Heart left ventricle (tissue), 16 donors: ENCODE measurements at regions of chrX and their contacts with region 1.

Region 1: GRCh38 chrX:48574270-48575266 is at the start of gene RBM3:
- DNase-seq: peak; percentile 93 to 95 (median 95)
- ATAC-seq: peak; percentile 96 to 98 (median 98)
- H3K4me3 ChIP-seq: peak within 1 kb of the TSS; percentile 25 to 96 (median 80)
- H3K27ac ChIP-seq: peak within 1 kb of the TSS; percentile 95 to 100 (median 98)
- H3K4me1 ChIP-seq: peaks cover 0 to 17% (median 12%) of the 10 kb centered on the region in 12 donors
- H3K27me3 ChIP-seq: no peaks in the 10 kb centered on the region
- CTCF ChIP-seq: peak in 11 of 12 donors; percentile 24 to 62 (median 41)
- POLR2A ChIP-seq: peak; percentile 25 to 64
- total RNA-seq, gene RBM3: 34.5 to 172 (median 111) TPM

Region 2: DNA sequence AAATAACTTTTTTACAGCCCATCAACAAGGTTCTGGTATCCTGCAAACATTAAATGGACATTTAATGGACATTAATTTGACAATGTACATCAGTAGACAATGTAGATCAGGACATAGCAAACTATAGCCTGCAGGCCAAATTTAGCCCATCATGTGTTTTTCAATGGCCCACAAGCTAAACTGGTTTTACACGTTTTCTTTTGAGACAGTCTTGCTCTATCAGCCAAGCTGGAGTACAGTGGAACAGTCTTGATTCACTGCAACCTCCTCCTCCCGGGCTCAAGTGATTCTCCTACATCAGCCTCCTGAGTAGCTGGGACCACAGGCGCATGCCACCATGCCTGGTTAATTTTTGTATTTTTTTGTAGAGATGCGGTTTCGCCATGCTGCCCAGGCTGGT is 510.3 kb before region 1 on chrX:
- intact Hi-C with region 1: no loop called
- DNase-seq: no peak
- ATAC-seq: no peak
- H3K4me3 ChIP-seq: no peak overlapping the region
- H3K27ac ChIP-seq: no peak overlapping the region
- H3K4me1 ChIP-seq: no peaks in the 10 kb centered on the region
- H3K27me3 ChIP-seq: peaks cover 0 to 3% (median 0%) of the 10 kb centered on the region in 9 donors
- CTCF ChIP-seq: no peak
- POLR2A ChIP-seq: no peak

Region 3: DNA sequence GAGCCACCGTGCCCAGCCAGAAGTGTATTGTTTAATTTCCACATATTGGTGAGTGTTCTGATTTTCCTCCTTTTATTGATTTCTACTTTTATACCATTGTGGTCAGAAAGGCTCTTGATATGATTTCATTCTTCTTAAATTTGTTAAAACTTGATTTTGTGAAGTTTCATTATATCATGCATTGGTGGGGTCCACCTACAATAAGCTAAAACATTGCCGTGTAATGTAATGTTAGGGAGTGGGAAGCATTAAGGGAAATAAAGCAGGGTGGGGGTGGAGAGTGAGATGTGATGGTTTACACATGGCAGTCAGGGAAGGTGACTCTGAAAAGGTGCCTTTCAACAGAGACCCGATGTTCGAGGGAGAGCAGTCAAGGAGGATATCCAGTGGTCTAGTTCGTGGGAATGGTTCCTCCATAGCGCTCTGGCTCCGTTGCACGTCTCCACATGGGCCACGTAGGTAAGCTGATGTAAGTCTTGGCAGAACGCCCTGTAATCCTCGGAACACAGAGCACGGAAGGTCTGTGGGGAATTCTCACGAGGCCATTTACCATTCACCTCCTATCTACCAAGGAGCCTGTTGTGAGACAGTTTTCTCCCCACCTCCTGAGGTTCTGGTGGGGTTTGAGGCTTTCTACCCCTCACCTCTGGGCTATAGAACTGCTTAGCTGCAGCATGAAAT is 15.1 kb after region 1 on chrX:
- intact Hi-C with region 1: loop called in 1 of 10 experiments (anchors 2 kb)
- DNase-seq: peak in 1 of 5 donors; percentile 49
- ATAC-seq: peak; percentile 26 to 61 (median 60)
- H3K4me3 ChIP-seq: peak overlapping the region in 2 of 12 donors; percentile 6 to 24
- H3K27ac ChIP-seq: peak overlapping the region; percentile 5 to 91 (median 72)
- H3K4me1 ChIP-seq: peaks cover 0 to 23% (median 0%) of the 10 kb centered on the region in 12 donors
- H3K27me3 ChIP-seq: peaks cover 0 to 5% (median 0%) of the 10 kb centered on the region in 9 donors
- CTCF ChIP-seq: no peak
- POLR2A ChIP-seq: peak in 1 of 2 donors; percentile 27